ENCODE measurements at regions of chr16 and their contacts with region 1.

Region 1: DNA sequence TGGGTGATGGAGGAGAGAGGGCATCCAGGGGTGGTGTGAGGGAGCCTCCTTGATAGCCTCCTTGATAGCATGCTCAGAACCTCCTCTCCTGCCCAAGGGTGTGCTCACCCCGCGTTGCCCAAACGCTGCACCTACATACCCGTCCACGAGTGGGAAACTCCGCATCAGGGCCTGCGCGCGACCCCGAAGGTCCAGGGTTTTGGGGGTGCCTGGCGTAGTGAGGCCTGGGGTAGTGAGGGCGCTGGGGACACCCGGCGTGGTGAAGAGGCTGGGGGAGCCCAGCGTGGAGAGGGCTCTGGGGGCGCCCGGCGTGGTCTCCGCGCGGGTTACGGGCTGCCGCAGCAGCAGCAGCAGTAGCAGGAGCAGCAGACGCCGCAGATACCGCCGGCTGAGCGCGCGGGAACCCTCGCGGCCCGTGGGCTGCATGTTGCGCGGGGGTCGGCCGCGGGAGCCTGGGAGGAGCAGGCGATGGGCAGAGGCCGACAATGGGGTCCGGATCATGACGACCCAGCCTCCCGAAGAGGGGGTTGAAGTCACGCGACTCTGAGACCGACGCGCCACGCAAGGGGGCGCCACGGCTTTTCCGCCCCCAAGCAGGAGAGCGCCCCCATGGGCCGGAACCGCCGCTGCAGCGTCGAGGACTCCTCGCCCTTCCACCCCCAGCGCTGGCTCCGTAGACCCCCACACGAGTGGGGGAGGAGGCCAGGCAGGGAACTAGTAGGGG is at the start of gene DPEP3:
- DNase-seq: peak; percentile 46 to 71 (median 66)
- H3K4me3 ChIP-seq: peak within 1 kb of the TSS in 2 of 7 experiments; percentile 11 to 26
- H3K27ac ChIP-seq: no peak within 1 kb of the TSS
- H3K4me1 ChIP-seq: peaks cover 8 to 19% (median 17%) of the 10 kb centered on the region in 4 experiments
- H3K27me3 ChIP-seq: no peaks in the 10 kb centered on the region

Region 2: DNA sequence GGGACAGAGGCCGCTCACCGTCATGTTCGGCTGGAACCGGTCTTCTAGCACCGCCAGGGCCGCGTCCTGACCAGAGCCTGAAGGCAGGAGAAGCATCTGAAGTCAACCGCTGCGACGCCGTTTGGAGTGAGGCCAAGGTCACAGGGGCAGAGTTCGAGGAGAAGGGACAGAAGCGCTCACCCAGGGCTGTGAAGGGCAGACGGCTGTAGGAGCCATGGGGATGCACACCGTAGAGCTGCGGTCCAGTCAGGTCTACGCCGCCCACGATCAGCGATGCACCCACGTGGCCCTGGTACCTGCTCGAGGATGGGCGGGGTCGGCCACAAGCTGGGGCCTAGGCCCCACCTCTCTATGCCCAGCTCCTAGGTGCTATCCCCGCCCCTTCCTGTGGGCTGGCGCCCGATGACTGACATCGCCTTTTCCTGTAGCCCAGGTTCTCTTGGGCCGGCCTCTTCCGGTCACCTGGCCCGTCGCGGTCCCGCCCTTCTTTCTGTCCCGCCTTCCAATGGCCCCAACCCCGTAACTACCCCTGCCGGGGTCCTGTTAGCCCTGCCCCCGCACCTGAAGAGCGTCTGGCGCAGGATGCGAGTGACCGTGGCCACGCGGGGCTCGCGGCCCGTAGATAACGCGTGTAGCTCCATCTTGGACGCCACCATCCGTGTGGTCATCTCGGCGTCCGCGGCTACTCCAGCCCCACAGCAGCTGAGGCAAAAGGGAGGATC is 44.6 kb before region 1 on chr16:
- CTCF ChIA-PET with region 1: no interaction called
- POLR2A ChIA-PET with region 1: interaction called, 16 read pairs
- DNase-seq: peak; percentile 91 to 96 (median 95)
- H3K4me3 ChIP-seq: peak overlapping the region; percentile 85 to 99 (median 96)
- H3K27ac ChIP-seq: peak overlapping the region; percentile 64 to 88
- H3K4me1 ChIP-seq: peaks cover 4 to 31% (median 29%) of the 10 kb centered on the region in 4 experiments
- H3K27me3 ChIP-seq: no peaks in the 10 kb centered on the region

Region 3: DNA sequence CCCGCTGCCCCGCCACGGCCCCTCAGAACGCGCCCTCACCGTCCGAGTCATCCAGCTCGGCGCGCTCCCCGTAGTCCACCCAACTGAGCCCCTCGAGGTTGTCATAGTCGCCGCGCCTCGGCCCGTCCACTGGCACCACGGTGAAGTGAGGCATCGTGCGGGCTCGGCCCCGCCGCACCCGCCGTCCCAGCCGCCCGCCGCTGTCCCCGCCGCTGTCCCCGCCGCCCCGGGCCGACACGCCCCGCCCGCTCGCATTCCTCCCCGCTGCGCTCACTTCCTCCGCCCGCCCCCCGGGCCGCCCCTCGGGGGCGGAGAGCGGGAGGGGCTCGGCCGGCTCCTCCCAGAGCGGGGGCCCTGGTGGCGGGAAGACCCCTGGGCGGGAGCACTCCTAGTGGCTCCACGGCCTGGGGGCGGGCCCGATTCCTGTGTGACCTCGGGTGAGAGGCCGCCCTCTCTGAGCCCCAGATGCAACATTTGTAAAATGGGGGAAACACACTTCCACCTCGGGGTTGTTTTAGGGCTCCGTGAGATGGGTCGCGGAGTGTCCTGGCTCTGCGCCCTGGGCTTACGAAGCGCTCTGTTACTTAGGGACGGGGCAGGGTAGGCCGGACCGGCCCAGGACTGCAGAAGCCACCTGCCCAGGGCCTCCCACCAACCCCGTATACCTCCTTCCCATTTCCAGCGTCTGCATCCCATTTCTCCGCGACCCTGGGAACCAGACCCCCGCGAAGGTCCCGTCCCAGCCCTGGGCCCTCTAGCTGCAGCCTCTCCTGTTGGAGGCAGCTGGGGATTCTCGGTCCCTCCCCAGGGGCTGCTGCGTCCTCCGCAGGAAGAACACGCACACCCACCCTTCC is 11.5 kb before region 1 on chr16 and contains the start of gene SLC12A4:
- CTCF ChIA-PET with region 1: interaction called, 69 read pairs
- POLR2A ChIA-PET with region 1: interaction called, 12 read pairs
- DNase-seq: peak; percentile 68 to 90 (median 89)
- H3K4me3 ChIP-seq: peak within 1 kb of the TSS; percentile 60 to 89 (median 82)
- H3K27ac ChIP-seq: peak within 1 kb of the TSS in 1 of 2 experiments; percentile 68
- H3K4me1 ChIP-seq: peaks cover 0 to 30% (median 20%) of the 10 kb centered on the region in 4 experiments
- H3K27me3 ChIP-seq: no peaks in the 10 kb centered on the region

Region 4: DNA sequence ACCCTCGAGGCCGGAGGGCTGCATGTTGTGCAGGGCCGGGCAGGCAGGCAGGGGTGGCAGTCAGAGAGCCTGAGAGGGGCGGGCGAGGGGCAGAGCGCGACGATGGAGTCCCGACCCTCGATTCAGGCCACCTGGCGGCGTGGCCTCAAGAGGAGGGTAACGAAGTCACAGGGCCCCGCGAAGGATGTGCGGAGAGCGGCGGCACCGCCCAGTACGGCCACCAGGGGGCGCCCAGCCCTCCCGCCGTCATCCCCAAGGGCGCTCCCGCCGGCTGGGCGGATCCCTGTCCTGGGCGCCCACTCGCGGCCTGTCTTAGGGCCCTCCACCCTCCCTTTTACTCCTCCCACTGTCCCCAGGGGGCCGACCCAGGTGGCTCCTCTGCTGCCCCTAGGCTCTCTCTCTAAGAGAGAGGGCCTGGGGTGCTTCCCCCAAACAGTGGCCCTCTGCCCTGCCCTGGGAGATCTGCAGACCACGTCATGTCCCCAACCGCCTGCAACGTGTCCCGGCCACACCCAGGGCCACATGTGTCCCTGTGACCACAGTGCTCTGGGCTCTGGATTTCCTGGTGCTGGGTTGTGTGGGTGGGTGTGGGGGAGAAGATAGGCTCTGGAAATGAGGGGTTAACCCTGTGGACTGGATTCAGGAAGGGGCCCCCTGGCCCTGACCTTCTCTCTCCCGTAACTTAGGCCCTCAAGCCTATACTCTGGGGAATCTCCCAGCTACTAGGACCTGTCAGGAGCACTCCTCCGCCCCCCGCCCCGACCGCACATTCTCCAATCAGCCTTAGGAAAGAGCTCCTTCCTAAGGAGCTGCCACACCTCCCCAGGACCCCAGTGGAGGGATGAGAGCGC is 13.3 kb after region 1 on chr16:
- CTCF ChIA-PET with region 1: interaction called, 35 read pairs
- POLR2A ChIA-PET with region 1: interaction called, 8 read pairs
- DNase-seq: peak; percentile 85 to 91 (median 88)
- H3K4me3 ChIP-seq: peak overlapping the region in 5 of 7 experiments; percentile 38 to 67 (median 57)
- H3K27ac ChIP-seq: peak overlapping the region in 1 of 2 experiments; percentile 81
- H3K4me1 ChIP-seq: peaks cover 0 to 34% (median 32%) of the 10 kb centered on the region in 4 experiments
- H3K27me3 ChIP-seq: no peaks in the 10 kb centered on the region